ENCODE measurements at regions of chr21 and their contacts with region 1.

Region 1: DNA sequence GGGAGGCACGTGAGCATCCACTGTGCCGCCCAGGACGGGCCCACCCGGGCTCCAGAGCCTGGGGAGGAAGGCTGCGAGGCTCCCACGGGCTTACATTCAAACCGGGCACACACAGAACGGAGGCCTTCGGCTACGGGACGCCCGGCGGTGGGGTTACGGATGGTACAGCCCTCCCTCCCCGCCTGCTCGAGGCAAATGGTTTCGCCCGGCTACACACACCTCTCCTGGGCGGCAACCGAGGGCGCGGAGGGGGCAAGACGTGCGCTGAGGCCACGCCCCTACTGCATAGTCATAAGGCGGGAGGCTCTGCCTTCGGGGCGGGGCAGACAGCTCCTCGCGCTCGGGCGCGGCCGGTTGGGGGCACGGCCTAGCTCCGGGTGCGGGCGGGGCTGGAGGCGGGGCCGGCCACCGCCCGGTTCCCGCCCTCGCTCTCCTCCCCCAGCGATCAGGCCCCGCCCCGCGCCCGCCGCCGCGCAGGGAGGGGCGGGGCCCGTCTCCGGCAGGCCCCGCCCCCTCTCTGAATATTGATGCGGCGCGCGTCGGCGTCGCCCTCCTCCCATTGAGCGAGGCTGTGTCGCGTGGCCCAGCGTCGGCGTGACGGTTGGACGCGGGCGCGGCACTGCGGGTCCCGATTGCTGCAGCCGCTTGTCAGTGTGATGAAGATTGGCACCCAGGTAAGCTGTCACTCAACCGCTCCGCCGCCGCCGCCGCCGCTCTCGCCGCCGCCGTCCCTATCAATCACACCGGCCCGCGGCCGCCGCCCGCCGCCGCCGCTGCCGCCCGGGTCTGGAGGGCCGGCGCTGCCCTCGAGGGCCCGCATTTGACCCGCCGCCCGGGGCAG is at the start of gene PKNOX1:
- DNase-seq: peak; percentile 64
- ATAC-seq: peak; percentile 96
- H3K4me3 ChIP-seq: peak within 1 kb of the TSS; percentile 65 to 78
- H3K27ac ChIP-seq: peak within 1 kb of the TSS; percentile 89
- H3K4me1 ChIP-seq: peaks cover 12% of the 10 kb centered on the region
- H3K27me3 ChIP-seq: no peaks in the 10 kb centered on the region
- CTCF ChIP-seq: no peak
- total RNA-seq, gene PKNOX1: 16.5 TPM

Region 2: DNA sequence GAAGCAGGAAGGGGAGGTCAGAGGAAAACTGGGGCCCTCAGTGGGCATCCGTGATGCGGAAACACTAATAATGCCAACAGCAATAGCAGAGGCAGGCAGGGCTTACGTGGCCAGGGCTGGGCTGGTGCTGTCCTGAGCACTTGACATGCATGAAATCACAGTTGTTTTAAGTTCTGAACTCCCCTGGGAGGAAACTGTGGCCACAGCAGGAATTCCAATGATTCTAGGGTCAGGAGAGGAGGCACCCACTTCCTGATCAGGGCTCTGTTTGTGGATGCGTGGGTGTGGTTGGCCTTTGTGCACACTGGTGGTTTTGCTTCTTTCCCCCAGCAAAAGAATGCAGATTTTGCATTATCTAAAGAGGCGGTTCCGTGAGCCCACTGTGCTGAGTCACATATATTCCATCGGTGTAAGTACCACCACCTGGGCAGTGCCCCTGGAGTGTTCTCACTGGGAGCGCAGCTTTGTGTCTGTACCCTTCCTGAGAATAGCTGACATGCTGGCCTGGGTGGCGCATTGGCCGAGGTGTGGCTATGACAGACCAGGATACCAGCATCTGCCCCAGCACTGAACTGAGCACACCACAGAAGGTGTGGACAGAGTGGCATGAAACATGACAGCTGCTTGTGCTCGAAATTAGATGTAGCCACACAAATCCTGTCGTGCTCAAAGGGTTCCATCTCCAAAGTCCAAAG is 249.8 kb before region 1 on chr21:
- CTCF ChIA-PET with region 1: no interaction called
- POLR2A ChIA-PET with region 1: no interaction called
- in situ Hi-C with region 1: no loop called
- intact Hi-C with region 1: no loop called
- DNase-seq: no peak
- ATAC-seq: no peak
- H3K4me3 ChIP-seq: no peak overlapping the region
- H3K27ac ChIP-seq: no peak overlapping the region
- H3K4me1 ChIP-seq: no peaks in the 10 kb centered on the region
- H3K27me3 ChIP-seq: no peaks in the 10 kb centered on the region; the same call in 1 of the 2 replicates
- CTCF ChIP-seq: no peak

Region 3: DNA sequence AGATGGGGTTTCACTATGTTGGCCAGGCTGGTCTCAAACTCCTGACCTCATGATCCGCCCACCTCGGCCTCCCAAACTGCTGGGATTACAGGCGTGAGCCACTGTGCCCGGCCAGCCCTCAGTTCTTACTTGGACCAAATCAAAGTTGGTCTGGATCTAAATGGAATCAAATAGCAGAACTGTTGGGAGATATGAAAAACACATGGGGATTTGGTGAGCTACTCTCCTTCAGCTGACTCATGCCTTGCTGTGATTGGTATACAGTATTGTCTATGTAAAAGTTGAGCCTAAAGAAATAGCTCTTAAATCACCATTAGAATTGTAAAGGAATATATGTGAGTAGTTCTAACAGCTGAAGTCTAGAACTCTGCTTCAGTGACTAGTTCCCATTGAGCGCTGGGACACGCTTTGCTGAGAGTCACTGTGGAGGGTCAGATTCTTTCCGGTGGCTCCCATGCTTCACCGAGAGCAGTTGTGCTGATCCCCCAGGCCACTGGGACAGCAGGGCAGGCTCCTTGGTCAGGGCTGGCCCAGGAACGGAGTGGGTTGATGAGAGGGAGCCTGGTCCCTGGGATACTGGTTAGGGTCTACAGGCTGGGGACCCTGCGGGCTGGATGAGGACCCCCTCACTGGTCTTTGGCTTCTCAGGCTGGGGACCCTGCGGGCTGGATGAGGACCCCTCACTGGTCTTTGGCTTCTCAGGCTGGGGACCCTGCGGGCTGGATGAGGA is 14.2 kb after region 1 on chr21:
- CTCF ChIA-PET with region 1: no interaction called
- POLR2A ChIA-PET with region 1: interaction called, 12 read pairs
- in situ Hi-C with region 1: no loop called
- intact Hi-C with region 1: no loop called
- DNase-seq: no peak
- ATAC-seq: no peak
- H3K4me3 ChIP-seq: no peak overlapping the region
- H3K27ac ChIP-seq: no peak overlapping the region
- H3K4me1 ChIP-seq: peaks cover 6% of the 10 kb centered on the region
- H3K27me3 ChIP-seq: no peaks in the 10 kb centered on the region
- CTCF ChIP-seq: no peak

Region 4: GRCh38 chr21:43893536-43894205 is 919.5 kb after region 1 on chr21:
- CTCF ChIA-PET with region 1: no interaction called
- POLR2A ChIA-PET with region 1: interaction called, 11 read pairs
- in situ Hi-C with region 1: no loop called
- intact Hi-C with region 1: no loop called
- DNase-seq: no peak
- ATAC-seq: peak; percentile 51; the same call in 1 of the 2 replicates
- H3K4me3 ChIP-seq: no peak overlapping the region
- H3K27ac ChIP-seq: no peak overlapping the region
- H3K4me1 ChIP-seq: no peaks in the 10 kb centered on the region
- H3K27me3 ChIP-seq: no peaks in the 10 kb centered on the region
- CTCF ChIP-seq: no peak

Measured in Panc1 (cell line).